Colonic mucosa (tissue), 4 donors: ENCODE measurements at regions of chr3 and their contacts with region 1.

Region 1: GRCh38 chr3:151146071-151146730 is 56.8 kb downstream of the GPR171 start:
- DNase-seq: peak; percentile 78
- H3K4me3 ChIP-seq: no peak overlapping the region
- H3K27ac ChIP-seq: no peak overlapping the region
- H3K4me1 ChIP-seq: peaks cover 6% of the 10 kb centered on the region
- H3K27me3 ChIP-seq: no peaks in the 10 kb centered on the region
- CTCF ChIP-seq: peak; percentile 90

Region 2: DNA sequence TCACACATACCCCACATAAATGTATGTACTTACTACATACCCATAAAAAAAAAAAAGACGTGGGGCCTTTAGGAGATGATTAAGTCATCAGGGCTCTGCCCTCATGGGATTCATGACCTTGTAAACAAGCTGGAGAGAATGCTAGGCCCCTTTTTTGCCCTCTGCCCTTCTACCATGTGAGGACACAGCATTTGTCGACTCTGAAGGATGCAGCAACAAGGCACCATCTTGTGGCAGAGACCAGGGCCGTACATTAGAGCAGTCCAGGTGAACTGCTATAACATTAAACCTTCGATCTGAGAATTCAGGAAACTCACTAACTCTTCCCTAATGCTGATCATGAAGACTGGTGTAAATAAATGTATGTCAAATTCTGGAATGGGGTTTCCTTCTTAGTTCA is 352.6 kb before region 1 on chr3:
- intact Hi-C with region 1: loop called (anchors 5 kb)
- DNase-seq: no peak
- H3K4me3 ChIP-seq: no peak overlapping the region
- H3K27ac ChIP-seq: no peak overlapping the region
- H3K4me1 ChIP-seq: no peaks in the 10 kb centered on the region
- H3K27me3 ChIP-seq: no peaks in the 10 kb centered on the region
- CTCF ChIP-seq: no peak

Region 3: DNA sequence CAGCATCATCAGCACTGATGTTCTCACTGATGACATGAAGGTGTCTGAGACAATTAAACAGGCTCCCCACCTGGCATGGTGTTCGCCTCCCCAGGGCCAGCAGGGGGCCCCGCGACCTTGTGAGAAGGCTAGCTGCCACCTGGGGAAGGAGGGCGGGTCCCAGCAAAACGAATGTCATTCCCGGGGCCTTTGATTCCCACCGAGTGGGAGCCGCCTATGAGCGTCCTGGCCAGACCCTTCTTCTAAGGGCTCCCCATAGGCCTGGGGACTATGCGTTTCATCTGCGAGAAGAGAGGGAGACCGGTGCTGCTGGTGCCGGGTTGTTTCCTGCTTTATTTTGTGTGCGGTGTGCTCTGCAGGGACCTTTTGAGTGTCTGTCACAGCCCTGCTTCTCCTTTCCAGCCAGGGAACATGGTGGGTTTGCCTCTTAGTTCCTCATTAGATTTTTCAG is 220.4 kb before region 1 on chr3:
- intact Hi-C with region 1: loop called (anchors 2 kb)
- DNase-seq: peak; percentile 48
- H3K4me3 ChIP-seq: no peak overlapping the region
- H3K27ac ChIP-seq: no peak overlapping the region
- H3K4me1 ChIP-seq: no peaks in the 10 kb centered on the region
- H3K27me3 ChIP-seq: no peaks in the 10 kb centered on the region
- CTCF ChIP-seq: peak; percentile 59